GM23248 (cell line): ENCODE measurements at regions of chr15 and their contacts with region 1.

Region 1: DNA sequence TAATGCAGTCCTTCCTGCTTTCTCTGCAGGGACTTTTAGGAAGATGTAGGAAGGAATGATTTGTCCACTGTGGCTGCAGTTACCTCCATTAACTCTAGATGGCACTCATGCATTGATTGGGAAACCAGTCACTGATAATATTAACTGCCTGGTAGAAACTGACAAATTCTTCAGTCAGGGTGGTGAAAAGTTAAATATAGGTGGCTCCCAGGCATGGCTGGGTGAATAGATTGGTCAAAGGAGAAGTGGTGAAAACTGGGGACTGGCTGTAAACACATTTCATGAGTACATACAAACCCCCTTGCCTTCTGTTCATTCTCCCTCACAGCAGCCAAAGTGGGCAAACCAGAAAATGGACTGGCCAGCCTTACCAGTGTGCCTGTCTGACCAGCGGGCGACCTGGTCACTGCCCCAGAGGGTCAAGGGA is 333.4 kb downstream of the THSD4 start:
- DNase-seq: peak; percentile 64
- H3K4me3 ChIP-seq: no peak overlapping the region
- H3K27ac ChIP-seq: no peak overlapping the region
- H3K4me1 ChIP-seq: peaks cover 21% of the 10 kb centered on the region
- H3K27me3 ChIP-seq: no peaks in the 10 kb centered on the region

Region 2: DNA sequence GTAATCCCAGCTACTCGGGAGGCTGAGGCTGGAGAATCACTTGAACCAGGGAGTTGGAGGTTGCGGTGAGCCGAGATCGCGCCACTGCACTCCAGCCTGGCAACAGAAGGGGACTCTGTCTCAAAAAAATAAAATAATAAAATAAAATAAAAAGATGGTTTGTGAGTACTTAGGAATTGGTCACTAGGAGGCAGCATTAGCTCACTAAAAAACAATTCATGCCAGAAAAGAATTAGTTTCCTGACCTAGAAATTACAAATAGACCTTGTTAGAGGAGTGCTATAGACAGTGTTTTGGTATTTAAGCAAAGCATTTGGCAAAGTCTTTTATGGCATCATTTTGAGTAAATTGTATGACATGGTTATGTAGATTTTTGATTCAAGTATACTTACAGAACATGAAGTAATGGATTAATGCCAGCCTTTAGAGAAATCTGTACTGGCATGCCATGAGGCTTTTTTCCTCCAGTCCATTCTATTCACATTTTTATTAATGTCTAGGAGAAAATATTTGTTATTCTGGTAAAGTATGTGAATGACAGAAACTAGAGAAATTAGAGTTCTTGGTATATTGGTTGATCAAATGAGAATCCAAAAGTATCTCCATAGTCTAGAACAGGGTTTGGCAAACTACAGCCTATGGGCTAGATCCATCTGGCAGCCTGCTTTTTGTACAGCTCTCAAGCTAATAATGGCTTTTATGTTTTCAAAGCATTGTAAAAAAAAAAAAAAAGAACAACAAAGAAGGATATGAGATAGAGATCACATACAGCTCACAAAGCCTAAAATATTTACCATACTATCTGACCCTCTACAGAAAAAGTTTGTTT is 474.5 kb before region 1 on chr15:
- in situ Hi-C with region 1: loop called (anchors 10 kb)
- DNase-seq: peak; percentile 75
- H3K4me3 ChIP-seq: no peak overlapping the region
- H3K27ac ChIP-seq: no peak overlapping the region
- H3K4me1 ChIP-seq: peaks cover 21% of the 10 kb centered on the region
- H3K27me3 ChIP-seq: no peaks in the 10 kb centered on the region

Region 3: GRCh38 chr15:71003319-71003718 is 445.4 kb before region 1 on chr15:
- in situ Hi-C with region 1: loop called (anchors 10 kb)
- DNase-seq: peak; percentile 49
- H3K4me3 ChIP-seq: no peak overlapping the region
- H3K27ac ChIP-seq: peak overlapping the region; percentile 21
- H3K4me1 ChIP-seq: peaks cover 20% of the 10 kb centered on the region
- H3K27me3 ChIP-seq: no peaks in the 10 kb centered on the region